Activated B cell treated with CpG ODN at 0.5 μM for 24 hours (primary cell): ENCODE measurements at regions of chr3 and their contacts with region 1.

Region 1: DNA sequence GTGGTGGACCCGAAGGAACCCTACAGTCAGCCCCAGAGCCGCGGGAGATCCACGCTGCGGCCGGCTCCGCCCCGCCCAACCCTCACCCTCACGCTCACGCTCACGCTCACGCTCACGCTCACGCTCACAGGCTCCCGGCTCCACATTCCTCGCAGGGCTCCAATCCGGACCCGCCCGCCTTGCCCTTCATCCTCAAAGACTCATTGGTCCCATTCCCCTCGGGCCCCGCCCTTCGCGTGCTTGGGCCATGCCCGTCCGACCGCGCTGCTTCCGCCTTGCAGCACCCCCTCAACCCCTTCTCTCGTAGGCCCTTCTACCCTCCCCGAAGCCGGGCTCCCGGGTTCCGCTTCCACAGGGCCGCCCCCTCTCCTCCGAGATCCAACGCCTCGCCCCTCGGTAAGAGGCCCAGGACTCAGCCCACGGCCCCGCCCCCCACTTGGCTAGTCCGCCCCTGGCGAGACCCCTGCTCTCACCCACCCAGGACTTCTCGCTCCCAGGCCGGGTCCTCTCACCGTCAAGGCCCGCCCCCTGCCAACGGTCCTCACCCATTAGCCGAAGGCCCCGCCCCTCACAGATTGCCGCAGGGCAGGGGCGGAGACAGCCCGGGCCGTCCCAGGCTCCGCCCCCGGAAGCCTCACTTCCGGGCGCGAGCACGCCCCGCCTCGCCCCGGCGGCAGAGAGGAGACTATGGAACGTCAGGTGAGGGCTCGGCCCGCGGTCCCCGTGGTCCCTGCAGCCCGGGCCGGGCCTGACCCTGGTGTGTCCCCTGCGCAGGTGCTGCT is at the start of gene APEH:
- DNase-seq: peak; percentile 98
- ATAC-seq: peak; percentile 88
- H3K4me3 Mint-ChIP-seq: peak within 1 kb of the TSS; percentile 91
- H3K27ac Mint-ChIP-seq: peak within 1 kb of the TSS; percentile 98
- H3K4me1 Mint-ChIP-seq: peaks cover 22% of the 10 kb centered on the region
- H3K27me3 Mint-ChIP-seq: no peaks in the 10 kb centered on the region
- CTCF ChIP-seq: no peak
- total RNA-seq, gene APEH: 109 and 113 TPM in 2 replicates

Region 2: DNA sequence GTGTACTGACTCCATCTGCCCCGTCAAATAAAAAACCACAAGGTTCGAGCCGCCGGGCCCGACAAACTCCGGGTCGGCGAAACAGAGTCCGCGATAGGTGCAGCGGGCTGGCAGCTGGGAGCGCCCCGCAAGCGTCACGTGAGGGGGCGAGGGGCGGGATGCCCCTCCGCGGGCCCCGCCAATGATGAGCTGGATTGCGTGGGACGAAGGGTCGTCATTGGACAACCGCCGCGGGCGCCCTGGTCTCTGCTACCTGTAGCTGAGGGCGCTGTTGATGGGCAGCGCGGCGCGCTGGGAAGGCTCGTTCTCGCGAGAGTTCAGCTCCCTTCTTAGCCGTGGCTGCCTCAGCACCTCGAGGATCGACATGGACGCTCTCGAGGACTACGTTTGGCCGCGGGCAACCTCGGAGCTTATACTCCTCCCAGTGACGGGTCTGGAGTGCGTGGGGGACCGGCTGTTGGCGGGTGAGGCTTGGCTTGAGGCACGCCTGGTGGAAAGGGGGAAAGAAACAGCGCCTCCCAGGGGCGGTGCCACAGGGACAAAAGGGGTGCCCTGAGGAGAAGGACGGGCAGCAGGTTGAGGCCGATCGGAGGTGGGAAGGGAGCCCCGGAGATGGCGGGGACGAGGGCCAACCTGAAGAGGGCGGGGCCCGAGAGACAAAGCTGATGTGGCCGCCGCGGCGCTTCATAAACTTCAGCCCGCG is 666.7 kb before region 1 on chr3 and contains the start of gene WDR6:
- CTCF ChIA-PET with region 1: no interaction called
- POLR2A ChIA-PET with region 1: no interaction called
- intact Hi-C with region 1: loop called (anchors 5 kb)
- DNase-seq: peak; percentile 91
- ATAC-seq: peak; percentile 89
- H3K4me3 Mint-ChIP-seq: peak within 1 kb of the TSS; percentile 100
- H3K27ac Mint-ChIP-seq: peak within 1 kb of the TSS; percentile 99
- H3K4me1 Mint-ChIP-seq: peaks cover 21% of the 10 kb centered on the region
- H3K27me3 Mint-ChIP-seq: no peaks in the 10 kb centered on the region
- CTCF ChIP-seq: no peak
- total RNA-seq, gene WDR6: 205 and 250 TPM in 2 replicates

Region 3: GRCh38 chr3:49469936-49470713 is 203.8 kb before region 1 on chr3 and contains the start of gene DAG1:
- CTCF ChIA-PET with region 1: no interaction called
- POLR2A ChIA-PET with region 1: no interaction called
- intact Hi-C with region 1: loop called (anchors 1 kb)
- DNase-seq: peak; percentile 97
- ATAC-seq: peak; percentile 87
- H3K4me3 Mint-ChIP-seq: peak within 1 kb of the TSS; percentile 91
- H3K27ac Mint-ChIP-seq: peak within 1 kb of the TSS; percentile 96
- H3K4me1 Mint-ChIP-seq: peaks cover 26% of the 10 kb centered on the region
- H3K27me3 Mint-ChIP-seq: no peaks in the 10 kb centered on the region
- CTCF ChIP-seq: no peak
- total RNA-seq, gene DAG1: 18.5 and 19.7 TPM in 2 replicates

Region 4: DNA sequence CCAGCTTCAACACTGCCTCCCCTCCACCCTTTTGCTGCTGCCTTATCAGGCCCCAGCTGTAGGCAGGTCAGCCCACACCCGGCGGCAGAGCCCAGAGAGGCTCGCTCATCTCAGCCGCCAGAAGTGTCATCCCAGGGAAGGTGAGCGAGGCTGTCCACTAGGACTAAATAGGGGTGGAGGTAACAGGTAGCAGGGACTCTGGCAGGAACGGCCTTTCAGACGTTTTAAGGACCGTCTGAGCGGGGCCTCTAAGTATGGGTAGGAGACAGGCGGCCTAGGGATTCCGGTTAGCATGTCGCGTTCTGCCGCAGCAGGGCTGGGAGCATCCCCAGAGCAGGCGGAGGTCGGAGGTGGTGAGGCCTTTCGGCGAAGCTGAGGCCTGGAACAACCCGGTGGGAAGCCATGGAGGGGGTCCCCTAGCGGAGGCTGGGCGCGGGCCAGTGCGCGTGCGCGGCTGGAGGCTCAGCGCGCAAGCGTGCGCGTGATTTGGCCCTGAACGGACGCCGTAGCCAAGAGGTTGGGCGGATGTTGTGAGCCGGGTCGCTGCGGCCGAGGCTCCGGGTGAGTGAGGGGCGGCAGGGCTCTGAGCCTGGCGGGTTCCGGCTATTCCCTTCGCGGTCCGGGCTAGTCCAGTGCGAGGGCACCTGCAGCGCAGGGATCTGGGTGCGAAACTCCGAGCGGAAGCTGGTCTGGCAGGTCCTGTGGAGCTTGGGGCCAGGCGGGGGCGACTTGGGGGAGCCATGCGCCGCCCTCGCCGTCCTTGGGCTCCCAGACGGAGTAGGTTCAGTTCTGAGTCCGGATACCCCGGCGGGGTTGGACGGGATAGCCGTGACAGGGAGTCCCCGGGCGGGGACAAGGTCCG is 15.4 kb after region 1 on chr3 and contains the starts of genes MST1 and RNF123:
- CTCF ChIA-PET with region 1: no interaction called
- POLR2A ChIA-PET with region 1: interaction called, 8 read pairs
- intact Hi-C with region 1: loop called (anchors 1 kb)
- DNase-seq: peak; percentile 95
- ATAC-seq: peak; percentile 83
- H3K4me3 Mint-ChIP-seq: peak within 1 kb of the TSS; percentile 97
- H3K27ac Mint-ChIP-seq: peak within 1 kb of the TSS; percentile 92
- H3K4me1 Mint-ChIP-seq: peaks cover 38% of the 10 kb centered on the region
- H3K27me3 Mint-ChIP-seq: peaks cover 3% of the 10 kb centered on the region
- CTCF ChIP-seq: no peak
- total RNA-seq, gene MST1: 4.7 and 8.0 TPM in 2 replicates
- total RNA-seq, gene RNF123: 35.1 and 51.4 TPM in 2 replicates

Region 5: DNA sequence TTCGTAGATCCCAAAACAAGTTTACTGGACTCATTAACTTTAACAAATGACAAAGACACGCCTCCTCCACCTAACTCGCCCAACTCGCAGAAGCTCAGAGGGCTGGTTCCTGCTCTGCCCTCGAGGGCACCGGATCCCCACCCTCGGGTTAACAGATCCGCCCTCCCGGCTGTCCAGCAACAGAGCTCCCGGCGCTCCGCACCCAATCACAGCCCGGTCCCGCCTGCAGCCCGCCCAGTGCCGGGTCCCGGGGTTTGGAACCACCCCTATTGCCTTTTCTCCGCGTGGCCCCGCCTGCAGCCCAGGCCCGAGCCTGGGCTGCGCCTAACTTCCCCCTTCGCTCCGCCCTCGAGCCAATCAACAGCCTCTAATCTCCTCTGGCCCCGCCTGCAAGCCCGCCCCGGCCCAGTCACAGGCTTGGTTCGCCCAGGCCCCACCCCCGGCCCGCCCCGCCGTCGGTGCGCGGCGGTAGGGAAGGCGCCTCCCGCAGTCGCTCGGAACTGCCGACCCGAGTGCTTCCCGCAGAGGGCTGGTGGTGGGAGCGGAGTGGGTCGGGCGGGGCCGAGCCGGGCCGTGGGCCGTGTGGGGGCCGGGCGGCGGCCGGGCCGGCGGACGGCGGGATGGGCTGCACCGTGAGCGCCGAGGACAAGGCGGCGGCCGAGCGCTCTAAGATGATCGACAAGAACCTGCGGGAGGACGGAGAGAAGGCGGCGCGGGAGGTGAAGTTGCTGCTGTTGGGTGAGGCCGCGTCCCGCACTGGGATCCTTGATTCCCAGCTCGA is 562.0 kb after region 1 on chr3 and contains the start of gene GNAI2:
- CTCF ChIA-PET with region 1: no interaction called
- POLR2A ChIA-PET with region 1: interaction called, 10 read pairs
- intact Hi-C with region 1: no loop called
- DNase-seq: peak; percentile 97
- ATAC-seq: peak; percentile 89
- H3K4me3 Mint-ChIP-seq: peak within 1 kb of the TSS; percentile 95
- H3K27ac Mint-ChIP-seq: peak within 1 kb of the TSS; percentile 91
- H3K4me1 Mint-ChIP-seq: peaks cover 54% of the 10 kb centered on the region
- H3K27me3 Mint-ChIP-seq: no peaks in the 10 kb centered on the region
- CTCF ChIP-seq: no peak
- total RNA-seq, gene GNAI2: 281 and 295 TPM in 2 replicates

Region 6: DNA sequence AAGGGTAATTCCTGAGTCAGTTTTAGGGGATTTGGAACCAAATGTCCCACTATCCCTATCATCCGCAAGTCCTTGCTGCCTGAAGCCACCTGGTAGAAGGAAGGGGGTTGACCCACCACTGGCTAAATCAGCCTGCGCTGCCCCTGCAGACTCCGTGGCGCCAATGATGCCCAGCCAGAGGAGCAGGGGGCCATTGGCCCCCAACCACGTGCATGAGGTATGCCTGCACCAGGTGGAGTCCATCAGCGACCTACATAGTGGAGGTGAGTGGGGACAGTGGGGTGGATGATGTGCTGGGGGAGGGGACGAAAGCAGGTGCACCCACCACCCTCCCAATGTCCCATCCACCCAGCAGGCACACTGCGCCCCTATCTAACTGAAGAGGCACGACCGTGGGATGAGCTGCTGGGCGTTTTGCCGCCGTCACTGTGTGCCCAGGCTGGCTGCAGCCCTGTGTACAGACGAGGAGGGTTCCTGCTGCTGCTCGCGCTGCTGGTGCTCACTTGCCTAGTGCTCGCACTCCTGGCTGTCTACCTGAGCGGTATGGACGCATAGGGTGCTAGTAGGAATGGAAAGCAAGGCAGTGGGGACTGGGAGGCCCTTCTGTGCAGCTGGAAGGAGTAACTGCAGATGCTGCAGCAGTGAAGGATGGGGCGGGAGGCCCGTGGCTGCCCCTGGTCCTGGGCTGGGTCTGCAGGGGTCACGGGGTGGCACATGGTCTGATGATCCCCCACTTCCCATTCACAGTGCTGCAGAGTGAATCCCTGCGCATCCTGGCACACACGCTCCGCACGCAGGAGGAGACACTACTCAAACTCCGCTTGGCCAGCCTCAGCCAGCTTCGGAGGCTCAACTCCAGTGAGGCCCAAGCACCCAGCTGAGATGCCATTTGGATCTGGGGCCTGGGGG is 612.7 kb after region 1 on chr3:
- CTCF ChIA-PET with region 1: no interaction called
- POLR2A ChIA-PET with region 1: no interaction called
- intact Hi-C with region 1: no loop called
- DNase-seq: no peak
- ATAC-seq: no peak
- H3K4me3 Mint-ChIP-seq: no peak overlapping the region
- H3K27ac Mint-ChIP-seq: no peak overlapping the region
- H3K4me1 Mint-ChIP-seq: peaks cover 6% of the 10 kb centered on the region
- H3K27me3 Mint-ChIP-seq: no peaks in the 10 kb centered on the region
- CTCF ChIP-seq: no peak